ENCODE measurements at regions of chr19 and their contacts with region 1.

Region 1: DNA sequence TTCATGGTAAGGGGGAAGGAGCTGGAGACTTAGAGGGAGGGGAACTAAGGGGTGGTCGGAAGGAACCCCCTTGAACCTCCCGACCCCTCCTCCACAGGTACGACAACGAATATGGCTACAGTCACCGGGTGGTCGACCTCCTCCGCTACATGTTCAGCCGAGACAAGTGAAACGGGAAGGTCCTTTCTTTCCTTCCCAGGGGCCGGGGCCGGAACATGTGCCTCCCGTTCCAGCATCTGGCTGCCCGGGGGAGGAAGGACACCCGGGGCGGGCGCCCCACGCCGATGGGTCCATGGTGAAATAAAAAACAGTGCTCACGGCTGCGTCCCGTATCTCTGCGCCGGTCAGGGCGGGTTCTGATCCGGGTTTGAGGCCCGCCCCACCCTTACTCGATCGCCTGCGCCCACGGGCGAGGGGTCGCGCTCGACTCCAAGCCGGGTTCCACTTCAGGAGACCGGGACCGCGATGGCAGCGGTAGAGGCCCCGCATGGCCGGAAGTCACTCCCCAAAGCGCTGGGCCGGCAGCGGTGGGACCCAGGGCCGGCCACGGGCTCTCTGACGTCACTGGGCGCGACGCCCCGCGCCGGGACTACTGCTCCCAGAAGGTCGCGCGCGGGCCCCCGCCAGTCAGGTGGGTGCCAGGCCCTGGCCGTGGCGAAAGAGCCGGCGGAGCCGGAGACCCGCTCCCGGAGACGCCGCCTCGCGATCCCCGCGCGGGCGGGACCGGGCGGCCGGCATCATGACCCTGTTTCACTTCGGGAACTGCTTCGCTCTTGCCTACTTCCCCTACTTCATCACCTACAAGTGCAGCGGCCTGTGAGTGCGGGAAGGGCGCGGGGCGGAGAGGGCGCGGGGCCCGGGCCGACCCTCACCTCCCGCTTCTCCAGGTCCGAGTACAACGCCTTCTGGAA is at the start of gene TMEM147:
- DNase-seq: peak; percentile 45 to 86 (median 73)
- ATAC-seq: peak; percentile 85
- H3K4me3 ChIP-seq: peak within 1 kb of the TSS; percentile 93
- H3K4me3 Mint-ChIP-seq: peak within 1 kb of the TSS; percentile 94
- H3K27ac ChIP-seq: peak within 1 kb of the TSS; percentile 64 to 90
- H3K27ac Mint-ChIP-seq: peak within 1 kb of the TSS; percentile 93
- H3K4me1 ChIP-seq: peaks cover 40% of the 10 kb centered on the region
- H3K4me1 Mint-ChIP-seq: peaks cover 36% of the 10 kb centered on the region
- H3K27me3 ChIP-seq: no peaks in the 10 kb centered on the region
- H3K27me3 Mint-ChIP-seq: no peaks in the 10 kb centered on the region
- CTCF ChIP-seq: no peak
- total RNA-seq, gene TMEM147: 20.3 to 22.0 TPM

Region 2: DNA sequence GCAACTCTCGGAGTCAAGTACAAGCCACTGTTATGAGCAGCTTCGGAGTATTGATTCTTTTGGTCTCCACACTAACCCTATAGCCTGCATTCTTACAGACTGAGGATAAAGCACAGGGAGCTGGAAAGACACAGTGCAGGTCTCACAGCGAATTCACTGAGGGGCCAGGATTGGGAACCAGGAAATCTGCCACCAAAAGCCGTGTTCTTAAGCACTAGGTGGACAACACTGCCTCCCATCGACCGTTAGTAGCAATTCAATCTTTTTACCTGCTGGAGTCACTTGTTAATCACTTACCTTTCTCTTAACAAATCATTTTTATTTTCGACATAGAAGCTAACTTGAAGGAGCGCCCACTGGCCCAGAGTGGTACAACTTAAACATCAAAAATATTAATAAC is 47.0 kb after region 1 on chr19:
- CTCF ChIA-PET with region 1: interaction called, 4 read pairs
- POLR2A ChIA-PET with region 1: no interaction called
- intact Hi-C with region 1: loop called in 1 of 2 experiments (anchors 5 kb)
- DNase-seq: peak in 4 of 14 experiments; percentile 38 to 71 (median 55)
- ATAC-seq: no peak
- H3K4me3 ChIP-seq: no peak overlapping the region
- H3K4me3 Mint-ChIP-seq: no peak overlapping the region
- H3K27ac ChIP-seq: no peak overlapping the region
- H3K27ac Mint-ChIP-seq: no peak overlapping the region
- H3K4me1 ChIP-seq: no peaks in the 10 kb centered on the region
- H3K4me1 Mint-ChIP-seq: no peaks in the 10 kb centered on the region
- H3K27me3 ChIP-seq: no peaks in the 10 kb centered on the region
- H3K27me3 Mint-ChIP-seq: peaks cover 17% of the 10 kb centered on the region
- CTCF ChIP-seq: peak; percentile 59

Region 3: DNA sequence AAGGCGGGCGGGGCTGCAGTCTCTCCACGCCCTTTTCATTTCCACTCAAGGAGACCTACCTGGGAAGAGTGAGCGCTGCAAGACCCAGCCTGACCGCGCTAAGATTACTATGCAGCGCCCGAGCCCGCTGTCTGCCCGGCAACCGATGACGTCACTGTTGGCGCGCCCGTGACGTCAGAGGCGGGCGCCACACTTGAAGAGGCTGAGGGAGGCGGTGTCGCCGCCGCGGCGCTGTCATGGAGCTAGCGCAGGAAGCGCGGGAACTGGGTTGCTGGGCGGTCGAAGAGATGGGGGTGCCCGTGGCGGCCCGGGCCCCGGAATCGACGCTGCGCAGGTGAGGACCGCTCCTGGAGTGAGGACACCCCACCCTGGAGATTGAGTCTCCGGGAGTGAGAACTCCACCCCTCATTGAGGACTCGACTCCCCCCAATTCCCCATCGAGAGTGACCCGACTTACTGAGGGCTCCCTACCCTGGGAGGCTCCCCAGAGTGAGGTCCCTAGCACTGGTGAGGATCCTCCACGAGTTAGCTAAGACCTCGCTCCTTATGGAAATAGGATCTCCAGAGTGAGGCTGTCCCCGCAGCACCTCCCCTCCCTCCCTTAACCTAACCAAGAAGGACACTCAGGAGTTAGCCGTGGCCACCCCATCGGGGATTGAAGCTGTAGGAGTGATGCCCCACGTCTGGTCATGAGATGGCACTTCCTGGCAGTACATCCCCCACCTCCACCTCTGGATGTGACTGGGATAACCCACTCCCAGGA is 67.5 kb after region 1 on chr19 and contains the start of gene HAUS5:
- CTCF ChIA-PET with region 1: no interaction called
- POLR2A ChIA-PET with region 1: no interaction called
- intact Hi-C with region 1: loop called in 1 of 2 experiments (anchors 1 kb)
- DNase-seq: peak; percentile 89 to 98 (median 95)
- ATAC-seq: peak; percentile 91
- H3K4me3 ChIP-seq: peak within 1 kb of the TSS; percentile 92
- H3K4me3 Mint-ChIP-seq: peak within 1 kb of the TSS; percentile 94
- H3K27ac ChIP-seq: peak within 1 kb of the TSS; percentile 70 to 72
- H3K27ac Mint-ChIP-seq: peak within 1 kb of the TSS; percentile 94
- H3K4me1 ChIP-seq: peaks cover 38% of the 10 kb centered on the region
- H3K4me1 Mint-ChIP-seq: peaks cover 36% of the 10 kb centered on the region
- H3K27me3 ChIP-seq: no peaks in the 10 kb centered on the region
- H3K27me3 Mint-ChIP-seq: no peaks in the 10 kb centered on the region
- CTCF ChIP-seq: no peak
- total RNA-seq, gene HAUS5: 28.4 to 29.9 TPM

Region 4: DNA sequence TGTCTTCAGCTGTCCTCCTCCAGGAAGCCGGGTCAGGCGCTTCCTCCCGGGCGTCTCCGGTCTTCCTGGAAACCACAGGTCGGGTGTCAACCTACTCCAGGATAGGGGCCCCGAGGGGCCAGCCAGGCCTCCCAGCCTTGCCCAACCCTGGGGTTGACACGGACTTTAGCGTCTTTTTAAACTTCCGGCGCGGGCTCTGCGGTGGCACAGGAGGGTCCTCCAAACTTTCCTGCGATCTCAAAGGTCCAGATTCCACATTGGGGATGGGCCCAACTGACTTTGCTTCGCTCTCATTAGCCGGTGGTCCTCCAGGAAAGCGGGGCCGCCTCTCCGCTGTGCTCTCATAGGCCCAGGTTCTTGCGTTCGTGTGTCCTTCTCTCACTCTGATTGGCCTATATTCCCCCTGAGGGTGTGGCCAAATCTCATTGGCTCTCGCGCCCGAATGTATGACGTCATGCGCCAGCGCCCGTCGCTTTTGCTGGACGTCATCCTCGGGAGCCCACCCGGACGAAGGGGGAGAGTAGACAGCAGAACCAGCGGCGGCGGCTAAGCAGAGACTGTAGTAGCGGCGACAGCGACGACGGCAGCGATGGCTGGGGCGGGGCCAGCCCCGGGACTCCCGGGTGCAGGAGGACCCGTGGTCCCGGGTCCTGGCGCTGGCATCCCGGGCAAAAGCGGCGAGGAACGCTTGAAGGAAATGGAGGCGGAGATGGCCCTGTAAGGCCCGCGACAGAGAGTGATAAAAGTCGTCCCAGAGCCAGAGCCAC is 83.5 kb after region 1 on chr19 and contains the start of gene RBM42:
- CTCF ChIA-PET with region 1: no interaction called
- POLR2A ChIA-PET with region 1: no interaction called
- intact Hi-C with region 1: loop called in 1 of 2 experiments (anchors 5 kb)
- DNase-seq: peak; percentile 89 to 99 (median 95)
- ATAC-seq: peak; percentile 99
- H3K4me3 ChIP-seq: peak within 1 kb of the TSS; percentile 87
- H3K4me3 Mint-ChIP-seq: peak within 1 kb of the TSS; percentile 99
- H3K27ac ChIP-seq: peak within 1 kb of the TSS; percentile 81 to 90
- H3K27ac Mint-ChIP-seq: peak within 1 kb of the TSS; percentile 89
- H3K4me1 ChIP-seq: peaks cover 23% of the 10 kb centered on the region
- H3K4me1 Mint-ChIP-seq: peaks cover 29% of the 10 kb centered on the region
- H3K27me3 ChIP-seq: no peaks in the 10 kb centered on the region
- H3K27me3 Mint-ChIP-seq: no peaks in the 10 kb centered on the region
- CTCF ChIP-seq: no peak
- total RNA-seq, gene RBM42: 45.7 to 48.8 TPM

Measured in CD4-positive, alpha-beta T cell (primary cell).